ENCODE measurements at regions of chr7 and their contacts with region 1.

Region 1: GRCh38 chr7:31648288-31648687 is 38.7 kb upstream of the PPP1R17 start:
- DNase-seq: no peak

Region 2: GRCh38 chr7:31735991-31736982 is 88.0 kb after region 1 on chr7:
- intact Hi-C with region 1: loop called (anchors 1 kb)
- DNase-seq: peak; percentile 53 to 95 (median 81)

Region 3: GRCh38 chr7:32204361-32205018 is 556.2 kb after region 1 on chr7:
- intact Hi-C with region 1: loop called (anchors 10 kb)
- DNase-seq: peak; percentile 68 to 98 (median 86)

Measured in posterior cingulate gyrus (tissue), 11 donors.